ENCODE measurements at regions of chr6 and their contacts with region 1.

Region 1: GRCh38 chr6:31197559-31198305 is 27.2 kb upstream of the POU5F1 start:
- DNase-seq: peak; percentile 82 to 88
- H3K4me3 ChIP-seq: peak overlapping the region; percentile 54
- H3K27ac ChIP-seq: peak overlapping the region; percentile 79
- H3K4me1 ChIP-seq: peaks cover 19% of the 10 kb centered on the region
- H3K27me3 ChIP-seq: no peaks in the 10 kb centered on the region
- CTCF ChIP-seq: no peak

Region 2: DNA sequence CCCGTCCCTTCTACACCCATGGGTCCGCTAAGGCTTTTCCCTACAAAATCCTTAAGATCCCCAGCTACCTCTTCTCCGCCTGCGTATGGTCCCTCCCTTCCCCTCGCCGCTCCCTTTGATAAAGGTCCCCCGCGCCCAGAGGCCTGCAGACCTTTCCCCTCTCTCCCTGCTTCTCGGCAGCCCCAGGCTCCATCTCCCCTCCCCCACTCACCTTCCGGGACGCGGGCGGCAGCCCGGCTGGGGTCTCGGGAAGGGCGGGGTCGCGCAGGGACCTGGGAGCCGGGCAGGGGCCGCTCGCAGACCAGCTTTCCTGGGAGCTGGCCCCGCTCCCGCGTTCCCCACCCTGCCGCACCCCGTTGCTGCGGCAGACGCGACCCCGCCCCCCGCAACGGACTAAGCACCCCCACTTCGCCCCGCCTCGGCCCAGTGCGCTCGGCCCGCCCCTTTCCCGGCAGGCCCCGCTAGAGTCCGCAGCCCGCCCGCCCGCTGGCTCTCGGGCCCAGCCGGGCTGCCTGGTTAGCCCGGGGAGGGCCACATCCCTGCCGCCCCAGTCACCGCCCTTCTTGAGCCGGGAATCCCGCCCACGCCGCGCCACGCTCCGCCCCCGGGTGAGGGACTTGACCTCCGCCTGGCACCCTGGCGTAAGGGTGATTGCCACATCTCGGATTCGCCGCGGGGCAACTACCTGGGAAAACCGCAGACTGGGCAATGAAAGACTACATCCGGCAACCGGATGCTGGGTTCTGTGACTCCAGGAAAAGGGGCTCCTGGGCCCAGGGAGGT is 455.2 kb before region 1 on chr6 and contains the start of gene FLOT1:
- CTCF ChIA-PET with region 1: no interaction called
- POLR2A ChIA-PET with region 1: interaction called, 10 read pairs
- intact Hi-C with region 1: no loop called
- DNase-seq: peak; percentile 94 to 100
- H3K4me3 ChIP-seq: peak within 1 kb of the TSS; percentile 86
- H3K27ac ChIP-seq: peak within 1 kb of the TSS; percentile 93
- H3K4me1 ChIP-seq: peaks cover 59% of the 10 kb centered on the region
- H3K27me3 ChIP-seq: no peaks in the 10 kb centered on the region
- CTCF ChIP-seq: no peak
- total RNA-seq, gene FLOT1: 225 and 234 TPM in 2 replicates

Region 3: GRCh38 chr6:31079656-31080261 is 118.0 kb before region 1 on chr6:
- CTCF ChIA-PET with region 1: no interaction called
- POLR2A ChIA-PET with region 1: no interaction called
- intact Hi-C with region 1: loop called (anchors 2 kb)
- DNase-seq: peak; percentile 46 to 64
- H3K4me3 ChIP-seq: no peak overlapping the region
- H3K27ac ChIP-seq: no peak overlapping the region
- H3K4me1 ChIP-seq: no peaks in the 10 kb centered on the region
- H3K27me3 ChIP-seq: no peaks in the 10 kb centered on the region
- CTCF ChIP-seq: peak; percentile 90

Region 4: DNA sequence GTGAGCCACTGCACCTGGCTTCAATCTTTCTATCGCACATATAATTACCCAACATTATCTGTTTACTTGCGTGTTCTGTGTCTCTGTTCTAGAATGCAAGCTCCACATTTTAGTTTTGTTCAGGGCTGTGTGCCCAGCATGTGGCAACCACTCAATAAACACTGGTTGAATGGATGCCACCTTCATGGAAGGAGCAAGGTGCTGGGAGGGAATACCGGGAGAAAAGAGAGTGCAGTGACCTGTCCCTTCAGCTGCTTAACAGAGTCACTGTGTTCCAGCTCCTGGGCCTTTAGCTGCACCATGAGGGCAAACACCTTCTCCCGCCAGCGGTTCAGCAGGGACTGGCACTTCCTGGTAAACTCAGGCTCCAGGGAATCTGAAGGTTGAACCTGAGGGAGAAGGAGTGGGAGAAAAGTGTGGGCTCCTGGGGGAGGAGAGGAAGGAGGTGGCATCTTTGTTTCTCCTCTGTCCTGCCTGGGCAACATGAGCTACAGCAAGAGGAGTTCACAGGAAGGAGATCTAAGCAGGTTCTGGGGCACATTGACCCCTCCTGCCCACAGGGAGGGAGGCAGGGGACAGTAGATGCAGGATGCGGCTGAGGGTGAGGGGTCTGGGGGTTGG is 47.8 kb before region 1 on chr6:
- CTCF ChIA-PET with region 1: no interaction called
- POLR2A ChIA-PET with region 1: no interaction called
- intact Hi-C with region 1: no loop called
- DNase-seq: no peak
- H3K4me3 ChIP-seq: no peak overlapping the region
- H3K27ac ChIP-seq: no peak overlapping the region
- H3K4me1 ChIP-seq: no peaks in the 10 kb centered on the region
- H3K27me3 ChIP-seq: no peaks in the 10 kb centered on the region
- CTCF ChIP-seq: no peak

Region 5: DNA sequence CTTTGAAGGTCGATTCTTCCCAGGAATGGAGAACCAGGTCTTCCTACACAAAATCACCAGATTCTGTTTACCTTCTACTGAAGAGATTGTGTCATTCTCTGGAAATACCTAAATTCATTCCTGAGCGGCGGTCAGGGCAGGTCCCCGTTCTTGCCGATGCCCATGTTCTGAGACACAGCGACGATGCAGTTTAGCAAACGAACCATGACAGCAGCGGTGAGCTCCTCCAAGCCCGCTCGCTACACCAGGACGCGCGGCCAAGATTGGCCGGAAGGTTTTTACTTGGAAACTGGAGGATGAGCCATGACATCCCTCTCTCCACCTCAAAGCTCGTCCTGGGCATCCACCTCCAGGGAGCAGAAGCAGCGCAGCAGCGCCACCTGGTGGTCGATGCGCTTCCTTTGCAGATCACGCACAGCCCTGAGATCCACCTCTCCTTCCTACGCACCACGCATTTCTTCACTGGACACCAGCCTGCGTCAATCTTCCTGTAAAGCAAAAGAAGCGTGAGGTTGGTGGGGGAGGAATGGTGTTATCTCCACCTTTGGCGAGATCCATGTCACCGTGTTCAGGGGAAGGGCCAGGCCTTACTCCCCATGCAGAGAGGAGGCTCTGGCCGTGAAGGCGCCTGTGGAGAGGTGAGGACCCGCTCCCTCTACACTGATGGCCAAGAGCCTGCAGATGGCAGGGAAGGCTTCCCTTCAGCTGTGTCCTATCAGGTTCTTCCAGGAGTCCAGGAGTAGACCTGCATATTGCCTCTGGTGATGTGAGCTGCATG is 169.2 kb after region 1 on chr6:
- CTCF ChIA-PET with region 1: interaction called, 4 read pairs
- POLR2A ChIA-PET with region 1: interaction called, 6 read pairs
- intact Hi-C with region 1: loop called (anchors 1 kb)
- DNase-seq: peak; percentile 64 to 65
- H3K4me3 ChIP-seq: peak overlapping the region; percentile 31; the same call in 1 of the 2 replicates
- H3K27ac ChIP-seq: no peak overlapping the region
- H3K4me1 ChIP-seq: no peaks in the 10 kb centered on the region
- H3K27me3 ChIP-seq: peaks cover 38% of the 10 kb centered on the region
- CTCF ChIP-seq: peak; percentile 88

Region 6: DNA sequence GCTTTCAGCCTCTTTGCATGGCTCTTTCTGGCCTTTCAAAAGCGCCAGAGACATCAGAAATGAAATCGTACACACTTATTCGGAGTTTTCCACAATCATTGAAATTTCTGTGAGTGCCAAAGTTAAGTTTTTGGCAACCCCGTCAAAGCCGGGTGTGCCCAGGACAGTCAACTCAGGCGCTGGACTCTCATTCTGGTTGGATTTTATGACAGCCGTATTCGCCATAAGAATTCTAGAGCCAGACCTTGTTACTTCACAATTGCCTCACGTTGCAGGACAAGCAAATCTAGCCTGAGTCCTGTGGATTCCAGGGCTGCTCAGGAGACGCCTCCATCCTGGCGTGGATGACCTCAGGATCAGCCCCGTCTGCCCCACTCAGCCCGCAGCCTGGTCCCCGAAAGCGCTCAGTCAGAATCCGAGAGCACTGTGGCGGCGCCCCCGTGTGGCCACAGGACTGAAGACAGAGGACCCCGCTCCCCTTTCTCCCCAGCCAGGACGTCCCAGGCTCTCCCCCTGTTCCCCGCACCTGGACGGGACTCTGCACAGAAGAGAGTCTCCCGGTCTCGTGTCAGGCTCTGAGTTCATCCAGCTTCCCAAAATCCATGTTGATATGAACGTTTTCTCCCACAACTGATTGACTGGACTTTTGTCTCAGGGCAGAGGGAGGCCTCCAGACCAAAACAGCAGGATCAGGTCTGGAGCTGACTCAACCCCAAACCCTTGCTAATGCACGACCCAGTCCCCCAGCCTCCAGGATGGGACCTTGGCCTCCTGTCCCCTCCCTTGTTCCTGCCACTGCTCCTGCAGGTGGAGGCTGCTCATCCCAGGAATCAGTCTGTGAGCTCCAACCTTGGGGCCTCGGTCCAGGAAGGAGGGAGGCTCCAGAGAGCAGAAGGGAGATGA is 243.9 kb after region 1 on chr6:
- CTCF ChIA-PET with region 1: no interaction called
- POLR2A ChIA-PET with region 1: no interaction called
- intact Hi-C with region 1: loop called (anchors 2 kb)
- DNase-seq: peak in 1 of 2 experiments; percentile 74
- H3K4me3 ChIP-seq: no peak overlapping the region
- H3K27ac ChIP-seq: no peak overlapping the region
- H3K4me1 ChIP-seq: no peaks in the 10 kb centered on the region
- H3K27me3 ChIP-seq: peaks cover 17% of the 10 kb centered on the region
- CTCF ChIP-seq: peak; percentile 82